ENCODE measurements at regions of chr4 and their contacts with region 1.

Region 1: GRCh38 chr4:149999485-150000074 is 78.7 kb upstream of the DCLK2 start:
- DNase-seq: no peak
- H3K4me3 ChIP-seq: no peak overlapping the region
- H3K27ac ChIP-seq: no peak overlapping the region
- H3K4me1 ChIP-seq: peaks cover 0 to 22% (median 3%) of the 10 kb centered on the region in 4 donors
- H3K27me3 ChIP-seq: no peaks in the 10 kb centered on the region
- CTCF ChIP-seq: peak; percentile 54 to 64 (median 61)
- EP300 ChIP-seq: no peak
- POLR2A ChIP-seq: no peak

Region 2: DNA sequence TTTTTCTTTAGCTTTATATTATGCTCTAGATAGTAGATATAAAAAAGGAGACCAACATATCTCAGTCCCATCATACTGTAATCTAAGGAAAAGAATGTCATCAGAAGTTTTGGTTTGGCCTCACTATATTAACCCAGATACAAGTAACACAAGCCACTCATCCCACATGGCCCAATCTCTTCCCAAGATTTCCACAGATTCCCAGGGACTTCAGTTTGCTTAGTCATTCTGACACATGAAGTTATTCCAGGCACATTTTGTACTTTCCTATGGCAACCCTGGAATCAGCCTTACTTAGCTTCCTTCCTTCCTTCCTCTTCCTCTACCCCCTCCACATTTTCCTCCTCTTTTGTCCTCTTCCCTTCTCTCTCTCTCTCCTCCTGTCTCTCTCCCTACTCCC is 57.0 kb after region 1 on chr4:
- in situ Hi-C with region 1: no loop called
- intact Hi-C with region 1: no loop called
- DNase-seq: no peak
- H3K4me3 ChIP-seq: no peak overlapping the region
- H3K27ac ChIP-seq: no peak overlapping the region
- H3K4me1 ChIP-seq: no peaks in the 10 kb centered on the region
- H3K27me3 ChIP-seq: no peaks in the 10 kb centered on the region
- CTCF ChIP-seq: no peak
- EP300 ChIP-seq: no peak
- POLR2A ChIP-seq: no peak

Region 3: GRCh38 chr4:150078637-150079581 is 79.3 kb after region 1 on chr4:
- in situ Hi-C with region 1: loop called in 1 of 4 experiments (anchors 10 kb)
- intact Hi-C with region 1: no loop called
- DNase-seq: peak; percentile 49
- H3K4me3 ChIP-seq: peak overlapping the region; percentile 56 to 83 (median 70)
- H3K27ac ChIP-seq: peak overlapping the region; percentile 85 to 91 (median 90)
- H3K4me1 ChIP-seq: peaks cover 0 to 25% (median 14%) of the 10 kb centered on the region in 4 donors
- H3K27me3 ChIP-seq: no peaks in the 10 kb centered on the region
- CTCF ChIP-seq: peak in 2 of 5 experiments; percentile 16 to 31
- EP300 ChIP-seq: no peak
- POLR2A ChIP-seq: no peak

Region 4: GRCh38 chr4:150217192-150217591 is 217.6 kb after region 1 on chr4:
- in situ Hi-C with region 1: loop called (anchors 10 to 25 kb)
- intact Hi-C with region 1: loop called (anchors 10 kb)
- DNase-seq: no peak
- H3K4me3 ChIP-seq: no peak overlapping the region
- H3K27ac ChIP-seq: no peak overlapping the region
- H3K4me1 ChIP-seq: no peaks in the 10 kb centered on the region
- H3K27me3 ChIP-seq: no peaks in the 10 kb centered on the region
- CTCF ChIP-seq: no peak
- EP300 ChIP-seq: no peak
- POLR2A ChIP-seq: no peak

Region 5: GRCh38 chr4:150232029-150232428 is 232.4 kb after region 1 on chr4:
- in situ Hi-C with region 1: no loop called
- intact Hi-C with region 1: no loop called
- DNase-seq: no peak
- H3K4me3 ChIP-seq: no peak overlapping the region
- H3K27ac ChIP-seq: no peak overlapping the region
- H3K4me1 ChIP-seq: peaks cover 0 to 14% (median 0%) of the 10 kb centered on the region in 4 donors
- H3K27me3 ChIP-seq: no peaks in the 10 kb centered on the region
- CTCF ChIP-seq: no peak
- EP300 ChIP-seq: no peak
- POLR2A ChIP-seq: no peak

Region 6: DNA sequence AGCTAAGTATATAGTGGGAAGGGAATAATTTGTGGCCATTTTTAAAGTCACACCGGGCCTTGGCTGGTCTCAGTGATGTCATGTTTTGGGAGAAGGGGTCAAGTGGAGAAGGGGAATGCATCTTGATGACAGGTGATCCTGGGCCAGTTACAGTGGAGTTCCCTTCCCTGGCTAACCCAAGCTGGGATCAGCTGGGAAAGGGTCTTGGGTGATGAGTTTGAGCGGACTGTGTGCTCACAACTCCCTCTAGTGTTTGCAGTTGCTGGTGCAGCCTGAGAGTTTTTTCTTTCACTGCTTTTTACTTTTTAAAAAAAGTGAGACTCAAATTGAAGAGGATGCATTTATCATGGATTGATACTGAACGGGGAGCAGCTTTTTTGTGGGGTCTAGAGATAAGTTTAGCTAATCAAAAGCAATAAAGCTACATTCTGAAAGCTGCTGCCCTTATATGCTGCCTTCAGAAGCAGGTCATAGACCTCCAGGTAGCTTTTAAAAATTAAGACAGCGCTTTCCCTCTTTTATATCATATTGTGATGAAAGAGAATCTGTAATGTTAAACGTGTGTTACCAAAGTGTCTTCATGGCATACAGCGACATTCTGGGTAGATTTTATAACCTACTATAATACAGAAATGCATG is 243.4 kb after region 1 on chr4:
- in situ Hi-C with region 1: loop called in 2 of 4 experiments (anchors 10 kb)
- intact Hi-C with region 1: loop called (anchors 10 kb)
- DNase-seq: no peak
- H3K4me3 ChIP-seq: no peak overlapping the region
- H3K27ac ChIP-seq: no peak overlapping the region
- H3K4me1 ChIP-seq: peaks cover 0 to 10% (median 2%) of the 10 kb centered on the region in 4 donors
- H3K27me3 ChIP-seq: no peaks in the 10 kb centered on the region
- CTCF ChIP-seq: peak; percentile 72 to 87 (median 84)
- EP300 ChIP-seq: no peak
- POLR2A ChIP-seq: no peak

Region 7: DNA sequence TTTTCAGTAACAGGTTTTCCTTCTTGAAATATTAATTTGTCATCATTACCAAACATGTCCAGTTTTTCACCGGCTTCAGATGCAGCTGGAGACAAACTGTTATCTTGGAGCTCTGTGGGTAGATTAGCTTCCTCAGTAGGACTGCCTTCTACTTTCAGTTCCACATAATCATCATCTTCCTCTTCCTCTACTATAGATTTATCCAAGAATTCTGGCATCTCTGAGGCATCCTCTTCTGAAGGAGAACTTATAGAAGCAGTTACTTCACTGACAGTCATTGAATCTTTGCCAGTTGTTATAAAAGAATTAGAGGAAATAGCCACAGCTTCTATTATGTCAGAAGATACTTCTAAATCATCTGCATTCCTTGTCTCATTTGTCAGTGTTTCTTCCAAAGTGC is 852.6 kb after region 1 on chr4:
- in situ Hi-C with region 1: loop called in 2 of 4 experiments (anchors 10 to 25 kb)
- intact Hi-C with region 1: no loop called
- DNase-seq: no peak
- H3K4me3 ChIP-seq: no peak overlapping the region
- H3K27ac ChIP-seq: no peak overlapping the region
- H3K4me1 ChIP-seq: peaks cover 0 to 11% (median 0%) of the 10 kb centered on the region in 4 donors
- H3K27me3 ChIP-seq: no peaks in the 10 kb centered on the region
- CTCF ChIP-seq: no peak
- EP300 ChIP-seq: no peak
- POLR2A ChIP-seq: no peak